A549 (cell line): ENCODE measurements at regions of chr19 and their contacts with region 1.

Region 1: GRCh38 chr19:32357720-32358119 is 12.3 kb downstream of the ZNF507 start:
- DNase-seq: peak; percentile 46 to 61
- ATAC-seq: peak; percentile 66 to 73; a peak in 4 of 6 replicates
- H3K4me3 ChIP-seq: no peak overlapping the region
- H3K27ac ChIP-seq: no peak overlapping the region
- H3K4me1 ChIP-seq: peaks cover 17% of the 10 kb centered on the region
- CTCF ChIP-seq: peak; percentile 70
- EP300 ChIP-seq: no peak
- POLR2A ChIP-seq: no peak
- RAD21 ChIP-seq: peak; percentile 54 to 55

Region 2: GRCh38 chr19:32373585-32374295 is 16.0 kb after region 1 on chr19:
- CTCF ChIA-PET with region 1: interaction called, 26 read pairs
- POLR2A ChIA-PET with region 1: interaction called, 3 read pairs
- DNase-seq: peak; percentile 96 to 100
- ATAC-seq: peak; percentile 98 to 99
- H3K4me3 ChIP-seq: peak overlapping the region; percentile 30
- H3K27ac ChIP-seq: peak overlapping the region; percentile 84 to 89
- H3K4me1 ChIP-seq: peaks cover 55% of the 10 kb centered on the region
- CTCF ChIP-seq: no peak
- EP300 ChIP-seq: peak; percentile 82 to 95; a peak in 3 of 5 replicates
- POLR2A ChIP-seq: no peak
- RAD21 ChIP-seq: peak in 1 of 2 experiments; percentile 42; a peak in 2 of 5 replicates

Region 3: DNA sequence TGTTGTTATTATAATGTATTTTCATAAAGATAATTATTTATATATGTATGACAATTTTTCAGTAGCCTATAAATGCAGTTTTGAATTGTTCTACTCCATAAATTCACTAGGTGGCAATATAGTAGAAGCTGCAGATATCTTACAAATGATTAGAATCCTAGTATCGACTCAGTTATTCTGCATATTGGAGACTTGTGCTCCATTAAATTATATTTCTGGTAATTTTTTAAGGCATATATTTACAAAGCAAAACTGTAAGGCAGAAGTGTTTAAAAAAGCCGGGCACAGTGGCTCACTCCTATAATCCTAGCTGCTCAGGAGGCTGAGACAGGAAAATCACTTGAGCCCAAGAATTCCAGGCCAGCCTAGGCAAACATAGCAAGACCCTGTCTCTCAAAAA is 106.6 kb after region 1 on chr19:
- CTCF ChIA-PET with region 1: no interaction called
- POLR2A ChIA-PET with region 1: no interaction called
- DNase-seq: peak in 1 of 2 experiments; percentile 44
- ATAC-seq: peak; percentile 48 to 71; a peak in 4 of 6 replicates
- H3K4me3 ChIP-seq: no peak overlapping the region
- H3K27ac ChIP-seq: no peak overlapping the region
- H3K4me1 ChIP-seq: no peaks in the 10 kb centered on the region
- CTCF ChIP-seq: peak; percentile 83
- EP300 ChIP-seq: no peak
- POLR2A ChIP-seq: no peak
- RAD21 ChIP-seq: peak; percentile 68 to 70

Region 4: DNA sequence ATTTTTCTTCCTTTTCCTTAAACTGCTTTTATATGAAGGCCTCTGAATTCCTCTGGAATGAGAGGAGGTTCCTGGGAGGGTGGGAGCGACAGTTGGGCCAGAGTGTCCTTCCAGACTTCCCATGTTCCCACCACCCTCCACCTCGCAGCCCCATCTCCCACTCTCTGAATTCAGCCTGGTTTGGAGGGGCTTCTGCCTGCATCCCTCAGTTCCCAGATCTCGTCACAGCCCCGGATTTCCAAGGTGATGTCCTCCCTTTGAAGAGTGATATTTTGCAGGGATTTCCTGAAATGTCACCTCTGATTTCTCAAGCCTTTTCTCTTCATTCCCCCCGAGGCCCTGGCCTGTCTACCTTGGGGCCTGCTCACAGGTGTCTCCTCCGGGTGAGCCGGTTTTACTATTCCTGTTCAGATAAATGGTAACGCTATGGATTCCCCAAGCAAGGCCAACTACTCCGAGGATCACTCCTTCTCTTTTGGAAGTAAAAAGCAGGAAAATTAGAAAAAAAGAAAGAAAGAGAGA is 528.6 kb after region 1 on chr19:
- CTCF ChIA-PET with region 1: no interaction called
- POLR2A ChIA-PET with region 1: no interaction called
- DNase-seq: no peak
- ATAC-seq: no peak
- H3K4me3 ChIP-seq: no peak overlapping the region
- H3K27ac ChIP-seq: no peak overlapping the region
- H3K4me1 ChIP-seq: no peaks in the 10 kb centered on the region
- CTCF ChIP-seq: no peak
- EP300 ChIP-seq: no peak
- POLR2A ChIP-seq: no peak
- RAD21 ChIP-seq: no peak